ENCODE measurements at regions of chr11 and their contacts with region 1.

Region 1: DNA sequence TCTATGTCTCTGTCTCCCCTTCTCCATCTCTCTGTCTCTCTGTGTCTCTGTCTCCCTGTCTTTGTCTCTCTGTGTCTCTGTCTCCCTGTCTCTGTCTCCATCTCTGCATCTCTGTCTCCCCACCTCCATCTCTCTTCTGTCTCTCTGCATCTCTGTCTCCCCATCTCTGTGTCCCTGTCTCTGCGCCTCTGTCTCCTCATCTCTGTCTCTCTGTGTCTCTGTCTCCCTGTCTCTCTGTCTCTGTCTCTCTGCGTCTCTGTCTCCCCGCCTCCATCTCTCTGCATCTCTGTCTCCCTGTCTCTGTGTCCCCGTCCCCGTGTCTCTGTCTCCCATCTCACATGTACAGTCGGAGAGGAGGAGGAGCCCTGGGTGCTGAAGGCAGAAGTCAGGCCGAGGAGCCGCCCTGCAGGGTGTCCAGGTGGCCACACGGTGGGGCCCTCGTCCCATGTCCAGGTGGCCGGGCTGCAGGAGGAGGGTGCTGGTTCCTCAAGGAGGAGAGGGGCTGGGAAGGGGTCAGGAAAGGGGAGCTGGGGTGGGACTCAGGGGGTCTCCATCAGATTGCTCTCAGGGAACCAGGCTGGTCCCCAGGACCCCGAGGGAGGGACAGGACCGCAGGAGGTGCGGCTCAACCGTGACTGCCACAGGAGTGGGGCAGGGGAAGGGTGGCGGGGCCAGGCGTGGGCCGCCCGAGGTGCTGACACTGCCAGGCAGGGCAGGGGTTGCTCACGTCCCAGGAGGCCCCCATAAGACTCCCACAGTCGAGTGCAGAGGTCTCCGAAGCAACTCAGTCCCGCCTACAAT is 25.6 kb upstream of the TH start:
- DNase-seq: peak; percentile 82 to 86 (median 82)
- ATAC-seq: peak; percentile 88 to 96 (median 92)
- H3K4me3 ChIP-seq: no peak overlapping the region
- H3K27ac ChIP-seq: no peak overlapping the region
- H3K4me1 ChIP-seq: no peaks in the 10 kb centered on the region
- H3K27me3 ChIP-seq: no peaks in the 10 kb centered on the region
- CTCF ChIP-seq: peak; percentile 77 to 97 (median 80)
- POLR2A ChIP-seq: no peak

Region 2: DNA sequence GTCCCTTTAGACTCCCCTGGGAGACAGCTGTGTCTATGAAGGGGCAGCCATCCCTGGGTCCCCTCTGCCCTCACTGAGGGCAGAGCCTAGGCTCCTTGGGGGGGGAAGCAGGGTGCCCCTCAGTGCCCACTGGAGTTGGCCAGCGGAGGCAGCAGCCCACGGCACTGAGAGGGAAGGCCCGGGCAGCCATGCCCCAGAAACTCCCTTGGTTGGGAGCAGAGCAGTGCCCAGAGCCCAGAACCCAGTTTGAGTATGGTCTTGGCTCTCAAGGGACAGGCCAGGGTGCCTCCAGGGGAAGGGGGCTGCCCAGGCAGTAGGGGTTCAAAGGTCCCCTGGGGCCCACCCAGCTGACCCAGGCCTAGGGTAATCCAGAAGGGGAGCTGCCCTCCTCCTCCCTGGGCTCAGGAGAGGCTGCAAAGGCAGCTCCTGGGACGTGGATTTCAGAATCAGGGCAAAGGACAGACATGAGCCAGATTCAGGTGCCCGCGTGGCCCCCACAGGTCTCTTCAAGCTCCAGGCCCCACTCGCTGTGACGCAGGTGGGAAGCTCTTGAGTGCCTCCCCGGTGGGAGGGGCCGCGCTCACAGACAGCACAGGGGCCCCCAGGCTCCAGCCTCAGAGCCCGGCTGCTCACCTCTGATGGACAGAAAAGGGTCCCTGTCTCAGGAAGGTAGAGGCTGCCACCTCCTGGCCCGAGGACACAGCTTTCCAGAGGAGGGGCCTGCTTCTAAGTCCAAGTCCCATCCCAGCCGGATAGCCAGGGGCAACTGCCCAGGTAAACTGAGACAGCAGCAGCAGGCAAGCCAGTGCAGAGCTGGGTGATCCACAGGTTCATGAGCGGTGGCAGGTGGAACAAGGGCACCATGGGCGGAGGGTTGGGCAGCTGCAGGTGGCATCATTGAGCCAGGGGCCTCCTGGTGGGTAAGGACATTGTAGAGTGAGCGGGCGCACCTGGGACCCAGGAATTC is 101.9 kb after region 1 on chr11:
- intact Hi-C with region 1: loop called (anchors 5 kb)
- DNase-seq: peak in 2 of 3 donors; percentile 48 to 60
- ATAC-seq: peak in 3 of 4 donors; percentile 26 to 48 (median 43)
- H3K4me3 ChIP-seq: no peak overlapping the region
- H3K27ac ChIP-seq: no peak overlapping the region
- H3K4me1 ChIP-seq: no peaks in the 10 kb centered on the region
- H3K27me3 ChIP-seq: no peaks in the 10 kb centered on the region
- CTCF ChIP-seq: peak; percentile 34 to 47 (median 38)
- POLR2A ChIP-seq: no peak

Region 3: GRCh38 chr11:2420502-2421225 is 223.5 kb after region 1 on chr11:
- intact Hi-C with region 1: loop called (anchors 2 to 5 kb)
- DNase-seq: peak; percentile 72 to 78 (median 78)
- ATAC-seq: peak; percentile 89 to 95 (median 94)
- H3K4me3 ChIP-seq: no peak overlapping the region
- H3K27ac ChIP-seq: no peak overlapping the region
- H3K4me1 ChIP-seq: no peaks in the 10 kb centered on the region
- H3K27me3 ChIP-seq: no peaks in the 10 kb centered on the region
- CTCF ChIP-seq: peak; percentile 92 to 95 (median 94)
- POLR2A ChIP-seq: no peak